ENCODE measurements at regions of chr11 and their contacts with region 1.

Region 1: DNA sequence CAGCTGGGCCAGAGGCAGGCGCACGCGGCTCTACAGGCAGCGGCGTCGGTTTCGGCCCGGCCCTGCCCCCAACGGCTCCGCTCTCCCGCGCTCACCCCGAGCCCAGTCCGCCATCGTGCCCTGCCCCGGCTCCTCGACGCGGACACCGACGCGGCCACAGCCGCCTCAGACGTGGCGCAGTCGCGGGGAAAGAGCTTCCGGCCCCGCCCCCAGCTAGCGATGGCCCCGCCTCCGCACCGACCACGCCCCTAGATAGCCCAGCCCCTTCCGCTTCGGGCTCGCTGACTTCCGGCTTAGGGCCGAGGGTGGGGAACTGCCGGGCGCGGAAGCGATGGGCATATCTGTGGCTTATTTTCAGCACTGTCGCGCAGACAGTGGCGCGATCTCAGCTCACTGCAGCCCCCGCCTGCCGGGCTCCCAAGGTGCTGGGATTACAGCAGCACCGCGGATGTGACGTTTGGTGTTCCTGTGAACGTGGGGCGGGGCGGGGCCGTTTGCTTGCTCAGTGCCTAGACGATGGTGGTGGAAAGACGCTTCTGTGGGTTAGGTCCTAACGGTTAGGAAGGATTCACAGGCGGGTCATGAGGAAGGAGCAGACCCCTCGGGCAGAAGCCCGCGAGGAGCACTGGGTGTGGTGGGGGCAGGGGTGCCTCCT is at the starts of genes BET1L and RIC8A:
- DNase-seq: peak; percentile 98
- H3K4me3 Mint-ChIP-seq: peak within 1 kb of the TSS; percentile 96
- H3K27ac Mint-ChIP-seq: peak within 1 kb of the TSS; percentile 98
- H3K4me1 Mint-ChIP-seq: peaks cover 69% of the 10 kb centered on the region
- H3K27me3 Mint-ChIP-seq: no peaks in the 10 kb centered on the region
- total RNA-seq, gene BET1L: 50.4 to 51.6 TPM
- total RNA-seq, gene RIC8A: 74.9 to 85.0 TPM

Region 2: DNA sequence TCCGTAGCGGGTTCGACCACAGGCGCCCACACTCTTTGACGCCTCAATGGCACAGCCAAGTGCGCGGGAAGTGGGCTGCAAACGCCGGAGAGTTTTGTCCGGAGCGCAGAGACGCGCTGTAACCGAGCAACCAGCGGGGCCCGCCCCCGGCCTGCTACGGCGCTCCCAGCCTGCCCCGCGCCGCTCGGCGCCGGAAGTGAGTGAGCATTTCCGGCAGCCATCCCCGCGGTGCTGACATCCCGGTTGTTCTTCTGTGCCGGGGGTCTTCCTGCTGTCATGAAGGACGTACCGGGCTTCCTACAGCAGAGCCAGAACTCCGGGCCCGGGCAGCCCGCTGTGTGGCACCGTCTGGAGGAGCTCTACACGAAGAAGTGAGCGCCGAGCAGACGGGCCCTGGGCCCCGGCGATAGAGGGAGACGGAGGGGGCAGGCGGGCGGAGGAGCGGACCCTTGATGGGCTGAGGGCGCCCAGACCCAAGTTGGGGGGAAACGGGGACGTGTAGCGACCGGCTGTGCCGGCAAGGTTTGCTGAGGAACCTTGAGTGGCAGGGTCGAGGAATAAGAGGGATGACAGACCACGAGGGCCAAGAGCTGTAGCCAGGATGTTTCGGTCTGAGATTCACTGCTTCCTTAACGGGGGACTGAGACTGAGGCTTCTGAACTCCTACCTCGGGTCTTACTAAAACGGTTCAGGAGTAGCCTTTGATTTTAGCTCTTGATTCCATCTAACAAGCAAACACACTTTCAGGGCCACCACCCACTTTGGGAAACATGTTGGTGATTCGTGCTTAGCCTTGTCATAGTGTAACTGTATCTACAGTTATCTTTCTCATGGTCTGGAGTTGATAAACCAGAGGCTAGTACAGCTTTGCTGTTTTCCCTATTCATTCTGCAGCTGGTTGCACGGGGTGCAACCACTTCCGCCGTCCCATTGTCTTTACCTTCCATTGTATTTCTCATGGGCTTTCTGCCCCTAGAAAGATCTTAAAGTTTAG is 29.7 kb after region 1 on chr11 and contains the start of gene PSMD13:
- CTCF ChIA-PET with region 1: interaction called, 6 read pairs
- intact Hi-C with region 1: loop called (anchors 1 kb)
- DNase-seq: peak; percentile 89
- H3K4me3 Mint-ChIP-seq: peak within 1 kb of the TSS; percentile 85
- H3K27ac Mint-ChIP-seq: peak within 1 kb of the TSS; percentile 95
- H3K4me1 Mint-ChIP-seq: peaks cover 45% of the 10 kb centered on the region
- H3K27me3 Mint-ChIP-seq: no peaks in the 10 kb centered on the region
- total RNA-seq, gene PSMD13: 206 to 210 TPM

Region 3: DNA sequence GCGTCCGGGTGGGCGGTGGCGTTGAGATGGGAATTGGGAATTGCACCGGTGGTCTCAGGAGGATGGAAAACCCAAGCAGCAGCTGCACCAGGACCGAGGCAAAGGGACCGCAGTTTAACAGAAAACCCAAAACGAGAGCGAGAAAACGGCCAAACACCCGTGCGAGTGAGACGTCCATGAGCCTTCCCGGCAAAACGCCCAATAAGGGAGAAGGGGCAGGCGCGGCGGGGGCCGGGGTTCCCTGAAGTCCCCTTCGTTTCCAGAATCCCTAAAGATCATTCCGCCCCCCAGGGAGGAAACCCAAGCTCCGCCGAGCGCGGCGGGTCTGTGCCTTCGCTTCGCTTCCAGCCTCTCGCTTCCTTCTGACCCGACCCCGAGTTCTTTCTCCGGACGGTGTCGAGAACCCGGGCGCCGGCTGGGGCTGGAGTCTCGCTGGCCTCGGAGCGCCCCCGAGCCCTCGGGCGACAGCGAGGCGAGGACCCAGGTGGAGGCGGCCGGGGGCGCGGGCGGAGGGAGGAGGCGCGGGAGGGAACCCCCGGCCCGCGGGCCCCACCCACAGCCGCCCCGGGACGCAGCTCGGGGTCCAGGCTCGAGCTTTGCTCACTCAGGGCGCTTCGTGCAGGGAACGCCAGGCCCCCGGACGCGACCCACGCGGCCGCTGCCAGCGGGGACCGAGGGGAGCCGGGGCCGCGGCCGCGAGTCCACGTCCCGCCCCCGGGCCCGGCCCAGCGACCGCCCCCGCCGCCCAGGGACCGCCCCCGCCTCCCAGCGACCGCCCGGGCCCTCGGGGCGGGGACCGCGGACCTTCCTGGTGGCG is 81.2 kb after region 1 on chr11 and contains the start of gene PGGHG:
- CTCF ChIA-PET with region 1: interaction called, 3 read pairs
- intact Hi-C with region 1: loop called (anchors 5 kb)
- DNase-seq: peak; percentile 36
- H3K4me3 Mint-ChIP-seq: peak within 1 kb of the TSS; percentile 98
- H3K27ac Mint-ChIP-seq: peak within 1 kb of the TSS; percentile 97
- H3K4me1 Mint-ChIP-seq: peaks cover 38% of the 10 kb centered on the region
- H3K27me3 Mint-ChIP-seq: peaks cover 2% of the 10 kb centered on the region
- total RNA-seq, gene PGGHG: 99.6 to 101 TPM

Region 4: GRCh38 chr11:355581-356458 is 148.5 kb after region 1 on chr11:
- CTCF ChIA-PET with region 1: interaction called, 6 read pairs
- intact Hi-C with region 1: loop called (anchors 1 kb)
- DNase-seq: peak; percentile 93
- H3K4me3 Mint-ChIP-seq: peak overlapping the region; percentile 94
- H3K27ac Mint-ChIP-seq: peak overlapping the region; percentile 99
- H3K4me1 Mint-ChIP-seq: peaks cover 36% of the 10 kb centered on the region
- H3K27me3 Mint-ChIP-seq: no peaks in the 10 kb centered on the region

Region 5: DNA sequence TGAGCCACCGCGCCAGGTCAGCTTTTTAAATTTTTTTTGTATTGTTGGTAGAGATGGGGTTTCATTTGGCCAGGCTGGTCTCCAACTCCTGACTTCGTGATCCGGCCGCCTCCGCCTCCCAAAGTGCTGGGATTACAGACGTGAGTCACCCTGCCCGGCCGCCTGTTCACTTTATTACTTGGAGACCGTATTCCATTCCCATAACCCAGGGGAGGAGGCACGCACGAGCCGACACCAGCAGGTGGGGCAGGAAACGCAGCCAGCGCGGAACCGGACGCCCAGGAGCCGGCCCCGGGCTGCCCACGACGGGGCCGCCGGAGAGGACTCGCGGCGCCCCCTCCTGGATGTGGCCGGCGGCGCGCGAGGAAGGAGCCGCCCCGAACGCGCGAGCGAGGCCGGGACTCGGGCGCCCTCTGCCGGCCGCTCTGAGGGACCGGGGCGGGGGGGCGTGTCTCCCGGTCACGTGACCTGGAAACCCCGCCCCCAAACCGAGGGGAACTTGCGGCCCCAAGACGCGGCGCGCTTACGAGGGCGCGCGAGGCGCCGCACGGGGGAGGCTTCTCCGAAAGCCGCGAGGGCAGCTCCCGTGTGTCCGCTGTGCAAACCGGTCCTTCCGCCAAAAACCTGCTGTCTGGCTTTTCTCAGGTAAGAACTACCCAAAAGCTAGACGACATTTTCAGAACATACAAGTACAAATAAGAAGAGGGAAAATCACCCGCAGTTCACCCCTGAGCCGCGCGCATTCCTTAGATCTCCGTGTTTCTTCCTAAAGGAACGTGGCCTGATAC is 311.3 kb after region 1 on chr11:
- CTCF ChIA-PET with region 1: no interaction called
- intact Hi-C with region 1: loop called (anchors 1 kb)
- DNase-seq: peak; percentile 87
- H3K4me3 Mint-ChIP-seq: peak overlapping the region; percentile 84
- H3K27ac Mint-ChIP-seq: peak overlapping the region; percentile 76
- H3K4me1 Mint-ChIP-seq: peaks cover 4% of the 10 kb centered on the region
- H3K27me3 Mint-ChIP-seq: no peaks in the 10 kb centered on the region

Region 6: DNA sequence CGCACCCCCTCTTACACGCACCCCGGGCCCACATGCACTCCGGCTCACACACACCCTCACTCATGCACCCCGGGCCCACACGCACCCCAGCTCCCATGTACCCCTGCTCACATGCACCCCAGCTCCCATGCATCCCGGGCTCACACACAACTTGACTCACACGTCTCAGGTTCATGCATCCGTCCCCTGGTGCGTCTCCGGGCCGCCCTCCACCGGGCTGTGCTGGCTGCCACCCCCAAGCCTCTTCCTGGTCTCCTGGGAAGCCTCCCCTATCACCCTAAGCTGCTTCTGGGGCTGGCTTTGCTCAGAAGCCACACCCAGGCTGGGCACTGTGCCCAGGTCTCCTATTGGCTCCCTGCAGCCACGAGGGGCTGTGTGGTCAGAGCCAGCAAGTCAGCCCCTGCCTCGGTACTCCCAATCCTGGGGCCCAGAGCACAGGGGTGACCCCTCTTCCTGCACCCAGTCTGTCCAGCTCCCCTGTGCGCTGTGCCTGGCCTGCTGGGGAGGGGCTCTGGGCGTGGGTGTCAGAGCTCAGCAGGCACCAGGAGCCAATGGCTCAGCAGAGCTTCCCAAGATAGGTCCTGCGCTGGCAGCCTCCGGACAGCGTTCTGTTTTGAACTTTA is 652.3 kb after region 1 on chr11:
- CTCF ChIA-PET with region 1: no interaction called
- intact Hi-C with region 1: no loop called
- DNase-seq: no peak
- H3K4me3 Mint-ChIP-seq: no peak overlapping the region
- H3K27ac Mint-ChIP-seq: no peak overlapping the region
- H3K4me1 Mint-ChIP-seq: no peaks in the 10 kb centered on the region
- H3K27me3 Mint-ChIP-seq: no peaks in the 10 kb centered on the region

Measured in activated naive CD4-positive, alpha-beta T cell treated with anti-CD3 and anti-CD28 coated beads for 36 hours (primary cell).